Heart left ventricle (tissue), 16 donors: ENCODE measurements at regions of chr7 and their contacts with region 1.

Region 1: GRCh38 chr7:23105644-23106056 is at the start of gene KLHL7:
- DNase-seq: peak; percentile 96 to 99 (median 97)
- ATAC-seq: peak; percentile 97 to 99 (median 98)
- H3K4me3 ChIP-seq: peak within 1 kb of the TSS; percentile 70 to 100 (median 90)
- H3K27ac ChIP-seq: peak within 1 kb of the TSS; percentile 89 to 97 (median 92)
- H3K4me1 ChIP-seq: peaks cover 0 to 44% (median 25%) of the 10 kb centered on the region in 12 donors
- H3K27me3 ChIP-seq: no peaks in the 10 kb centered on the region
- CTCF ChIP-seq: no peak
- POLR2A ChIP-seq: peak; percentile 56 to 97
- total RNA-seq, gene KLHL7: 63.4 to 159 (median 120) TPM

Region 2: DNA sequence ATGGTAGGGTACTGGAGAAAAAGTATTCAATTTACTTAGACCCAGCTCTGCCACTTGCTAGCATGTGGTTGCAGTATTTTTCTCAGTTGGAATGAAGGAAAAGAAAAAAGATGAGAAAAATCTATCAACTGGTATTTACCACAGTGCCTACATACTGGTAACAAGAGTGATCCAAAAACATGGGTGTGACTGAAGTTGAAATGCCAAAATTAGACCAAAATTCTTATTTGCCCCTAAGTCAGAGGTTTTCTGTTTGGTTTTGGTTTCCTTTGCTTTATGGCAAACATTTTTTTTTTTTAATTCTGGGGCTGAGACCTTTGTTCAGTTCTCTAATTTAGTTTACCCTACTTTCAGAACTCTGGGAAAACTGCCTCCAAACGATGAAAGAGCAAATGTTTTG is 104.0 kb before region 1 on chr7:
- intact Hi-C with region 1: no loop called
- DNase-seq: no peak
- ATAC-seq: no peak
- H3K4me3 ChIP-seq: no peak overlapping the region
- H3K27ac ChIP-seq: no peak overlapping the region
- H3K4me1 ChIP-seq: peaks cover 0 to 44% (median 21%) of the 10 kb centered on the region in 12 donors
- H3K27me3 ChIP-seq: no peaks in the 10 kb centered on the region
- CTCF ChIP-seq: no peak
- POLR2A ChIP-seq: no peak

Region 3: GRCh38 chr7:23043441-23043840 is 62.2 kb before region 1 on chr7:
- intact Hi-C with region 1: no loop called
- DNase-seq: no peak
- ATAC-seq: no peak
- H3K4me3 ChIP-seq: no peak overlapping the region
- H3K27ac ChIP-seq: no peak overlapping the region
- H3K4me1 ChIP-seq: no peaks in the 10 kb centered on the region
- H3K27me3 ChIP-seq: no peaks in the 10 kb centered on the region
- CTCF ChIP-seq: no peak
- POLR2A ChIP-seq: no peak

Region 4: DNA sequence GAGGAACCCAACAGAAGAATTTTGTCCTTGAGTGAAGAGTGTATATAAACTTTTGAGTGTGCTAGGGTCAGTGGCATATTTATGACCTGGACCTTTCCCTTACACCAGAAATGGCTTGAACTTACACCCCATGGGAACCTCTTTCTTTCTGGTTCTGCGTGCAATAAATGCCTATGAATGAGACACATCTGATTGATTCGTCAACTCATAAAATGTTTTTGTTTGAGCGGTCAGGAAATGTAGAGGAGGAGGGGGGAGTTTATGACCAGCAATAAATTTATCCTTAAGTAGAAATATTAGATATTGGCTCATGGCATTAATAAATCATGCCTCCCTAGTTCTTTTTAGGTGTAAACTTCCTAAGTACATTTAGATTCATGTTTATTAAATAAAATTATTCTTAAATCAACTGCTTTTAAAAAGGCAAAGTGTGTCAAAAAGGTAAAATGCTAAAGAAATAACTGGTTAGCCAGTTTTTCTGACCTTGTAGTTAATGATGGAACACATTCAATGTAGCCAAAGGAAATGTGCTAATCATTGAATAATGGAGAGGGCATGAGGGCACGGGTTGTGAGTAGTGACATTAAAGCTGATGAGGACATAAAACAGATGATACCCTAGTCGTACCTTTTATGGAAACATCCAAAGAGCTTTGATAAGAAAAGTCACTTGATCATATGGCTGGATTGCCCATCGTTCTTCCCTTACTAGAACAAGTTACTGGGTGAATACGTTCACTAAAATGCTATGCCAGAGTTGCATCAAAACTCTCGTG is 62.6 kb after region 1 on chr7:
- intact Hi-C with region 1: loop called in 1 of 10 experiments (anchors 5 kb)
- DNase-seq: no peak
- ATAC-seq: peak; percentile 71 to 90 (median 80)
- H3K4me3 ChIP-seq: no peak overlapping the region
- H3K27ac ChIP-seq: peak overlapping the region; percentile 25 to 79 (median 66)
- H3K4me1 ChIP-seq: peaks cover 0 to 12% (median 0%) of the 10 kb centered on the region in 12 donors
- H3K27me3 ChIP-seq: no peaks in the 10 kb centered on the region
- CTCF ChIP-seq: no peak
- POLR2A ChIP-seq: no peak

Region 5: DNA sequence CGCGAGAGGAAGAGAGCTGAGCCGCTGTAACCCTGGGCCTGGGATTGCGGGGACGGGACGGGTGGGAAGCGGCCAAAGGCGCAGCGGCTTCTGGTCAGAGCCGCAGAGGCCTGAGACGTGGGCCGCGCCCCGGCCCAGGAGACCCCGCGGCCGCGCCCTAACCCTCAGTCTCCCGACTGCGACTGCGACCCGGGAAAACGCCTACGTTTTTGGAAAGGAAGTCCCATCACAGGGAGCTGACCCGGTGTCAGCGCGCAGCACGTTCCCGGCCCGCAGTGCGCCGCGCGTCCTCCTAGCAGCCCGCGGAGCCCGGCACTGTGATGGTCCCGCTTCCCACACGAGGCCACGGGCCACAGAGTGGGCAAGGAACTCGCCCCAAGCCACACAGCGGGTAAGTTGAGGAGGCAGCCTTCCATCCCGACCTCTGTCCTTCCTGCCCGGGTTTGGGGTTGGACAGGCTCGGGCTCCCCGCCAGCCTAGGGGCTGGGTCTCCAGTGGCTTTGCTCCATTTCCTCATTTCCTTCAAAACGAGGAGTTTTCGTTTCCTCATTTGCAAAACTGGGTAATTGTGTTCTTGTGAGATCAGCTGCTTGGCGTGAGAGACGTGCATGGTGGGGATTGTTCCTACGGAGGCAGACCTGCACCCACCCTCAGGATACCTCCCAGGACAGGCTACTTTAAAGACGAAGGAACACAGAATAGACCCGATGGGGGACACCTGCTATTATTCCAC is 142.1 kb after region 1 on chr7:
- intact Hi-C with region 1: loop called in 5 of 10 experiments (anchors 5 to 10 kb)
- DNase-seq: peak; percentile 42 to 81 (median 52)
- ATAC-seq: peak; percentile 48 to 85 (median 76)
- H3K4me3 ChIP-seq: peak overlapping the region; percentile 11 to 72 (median 58)
- H3K27ac ChIP-seq: peak overlapping the region; percentile 16 to 90 (median 82)
- H3K4me1 ChIP-seq: peaks cover 0 to 33% (median 15%) of the 10 kb centered on the region in 12 donors
- H3K27me3 ChIP-seq: peaks cover 0 to 4% (median 0%) of the 10 kb centered on the region in 9 donors
- CTCF ChIP-seq: no peak
- POLR2A ChIP-seq: peak in 1 of 2 donors; percentile 14

Region 6: GRCh38 chr7:23254051-23254681 is 148.5 kb after region 1 on chr7:
- intact Hi-C with region 1: loop called in 5 of 10 experiments (anchors 5 to 10 kb)
- DNase-seq: no peak
- ATAC-seq: no peak
- H3K4me3 ChIP-seq: no peak overlapping the region
- H3K27ac ChIP-seq: no peak overlapping the region
- H3K4me1 ChIP-seq: peaks cover 0 to 5% (median 0%) of the 10 kb centered on the region in 12 donors
- H3K27me3 ChIP-seq: no peaks in the 10 kb centered on the region
- CTCF ChIP-seq: no peak
- POLR2A ChIP-seq: no peak

Region 7: DNA sequence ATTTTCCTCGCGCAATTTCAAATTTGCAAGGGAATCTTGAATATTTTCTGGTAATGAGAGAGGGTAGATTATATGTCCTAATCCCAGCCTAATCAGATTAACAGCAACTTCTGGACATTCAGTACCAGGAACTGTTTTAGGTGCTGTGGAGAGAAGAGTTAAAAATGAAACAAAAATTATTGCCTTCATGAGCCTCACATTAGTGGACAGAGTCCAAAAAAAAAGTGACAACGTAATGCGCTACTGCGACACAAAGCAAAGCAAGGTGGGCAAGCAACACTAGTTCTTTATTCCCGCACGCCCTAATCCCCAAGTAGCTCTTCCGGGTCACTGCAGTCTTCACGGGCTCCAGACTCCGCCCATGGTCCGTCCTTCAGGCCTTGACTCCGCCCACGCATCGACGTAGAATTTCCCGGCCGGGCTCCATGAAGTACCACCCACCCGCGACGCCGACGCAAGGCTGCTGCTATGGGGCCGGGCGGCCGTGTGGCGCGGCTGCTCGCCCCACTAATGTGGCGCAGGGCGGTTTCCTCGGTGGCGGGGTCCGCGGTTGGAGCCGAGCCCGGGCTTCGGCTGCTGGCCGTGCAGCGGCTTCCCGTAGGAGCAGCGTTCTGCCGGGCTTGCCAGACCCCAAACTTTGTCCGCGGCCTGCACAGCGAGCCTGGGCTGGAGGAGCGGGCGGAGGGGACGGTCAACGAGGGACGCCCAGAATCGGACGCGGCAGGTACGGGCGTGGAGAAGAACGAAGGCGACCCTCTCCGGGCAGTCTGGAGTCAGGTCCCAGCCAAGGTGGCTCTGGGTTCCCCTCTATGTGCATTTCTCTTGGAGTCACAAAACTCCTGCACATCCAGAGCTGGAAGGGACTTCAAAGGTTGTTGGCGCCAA is 193.5 kb after region 1 on chr7 and contains the start of gene MALSU1:
- intact Hi-C with region 1: loop called in 1 of 10 experiments (anchors 10 kb)
- DNase-seq: peak; percentile 96 to 98 (median 98)
- ATAC-seq: peak; percentile 98 to 100 (median 100)
- H3K4me3 ChIP-seq: peak within 1 kb of the TSS; percentile 78 to 98 (median 86)
- H3K27ac ChIP-seq: peak within 1 kb of the TSS; percentile 26 to 90 (median 84)
- H3K4me1 ChIP-seq: peaks cover 4 to 48% (median 26%) of the 10 kb centered on the region in 12 donors
- H3K27me3 ChIP-seq: no peaks in the 10 kb centered on the region
- CTCF ChIP-seq: peak in 1 of 12 donors; percentile 12
- POLR2A ChIP-seq: peak; percentile 14 to 90
- total RNA-seq, gene MALSU1: 73.1 to 128 (median 104) TPM